Calu3 (cell line): ENCODE measurements at regions of chr20 and their contacts with region 1.

Region 1: GRCh38 chr20:33097001-33097400 is 17.6 kb downstream of the BPIFB4 start:
- DNase-seq: no peak
- H3K4me3 Mint-ChIP-seq: no peak overlapping the region
- H3K27ac Mint-ChIP-seq: no peak overlapping the region
- H3K4me1 Mint-ChIP-seq: no peaks in the 10 kb centered on the region
- H3K27me3 Mint-ChIP-seq: peaks cover 72% of the 10 kb centered on the region
- CTCF ChIP-seq: no peak

Region 2: DNA sequence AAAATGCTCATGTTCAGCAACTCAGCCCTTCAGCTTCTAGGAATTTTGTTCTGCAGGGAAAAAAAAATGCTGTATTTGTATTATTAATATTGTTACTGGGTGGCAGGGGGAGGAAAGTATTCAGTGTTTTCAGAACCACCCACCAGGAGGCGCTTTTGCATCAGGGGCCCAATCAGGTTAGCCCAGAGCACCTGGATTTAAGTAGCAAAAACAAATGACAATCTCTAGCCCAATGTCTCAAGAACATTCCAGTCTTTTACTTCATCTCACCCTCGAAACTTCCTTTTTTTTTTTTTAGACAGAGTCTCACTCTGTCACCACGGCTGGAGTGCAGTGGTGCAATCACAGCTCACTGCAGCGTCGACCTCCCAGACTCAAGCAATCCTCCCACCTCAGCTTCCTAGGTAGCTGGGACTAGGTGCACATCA is 422.6 kb before region 1 on chr20:
- CTCF ChIA-PET with region 1: no interaction called
- intact Hi-C with region 1: loop called (anchors 5 kb)
- DNase-seq: peak; percentile 83
- H3K4me3 Mint-ChIP-seq: no peak overlapping the region
- H3K27ac Mint-ChIP-seq: no peak overlapping the region
- H3K4me1 Mint-ChIP-seq: no peaks in the 10 kb centered on the region
- H3K27me3 Mint-ChIP-seq: no peaks in the 10 kb centered on the region
- CTCF ChIP-seq: peak; percentile 88

Region 3: DNA sequence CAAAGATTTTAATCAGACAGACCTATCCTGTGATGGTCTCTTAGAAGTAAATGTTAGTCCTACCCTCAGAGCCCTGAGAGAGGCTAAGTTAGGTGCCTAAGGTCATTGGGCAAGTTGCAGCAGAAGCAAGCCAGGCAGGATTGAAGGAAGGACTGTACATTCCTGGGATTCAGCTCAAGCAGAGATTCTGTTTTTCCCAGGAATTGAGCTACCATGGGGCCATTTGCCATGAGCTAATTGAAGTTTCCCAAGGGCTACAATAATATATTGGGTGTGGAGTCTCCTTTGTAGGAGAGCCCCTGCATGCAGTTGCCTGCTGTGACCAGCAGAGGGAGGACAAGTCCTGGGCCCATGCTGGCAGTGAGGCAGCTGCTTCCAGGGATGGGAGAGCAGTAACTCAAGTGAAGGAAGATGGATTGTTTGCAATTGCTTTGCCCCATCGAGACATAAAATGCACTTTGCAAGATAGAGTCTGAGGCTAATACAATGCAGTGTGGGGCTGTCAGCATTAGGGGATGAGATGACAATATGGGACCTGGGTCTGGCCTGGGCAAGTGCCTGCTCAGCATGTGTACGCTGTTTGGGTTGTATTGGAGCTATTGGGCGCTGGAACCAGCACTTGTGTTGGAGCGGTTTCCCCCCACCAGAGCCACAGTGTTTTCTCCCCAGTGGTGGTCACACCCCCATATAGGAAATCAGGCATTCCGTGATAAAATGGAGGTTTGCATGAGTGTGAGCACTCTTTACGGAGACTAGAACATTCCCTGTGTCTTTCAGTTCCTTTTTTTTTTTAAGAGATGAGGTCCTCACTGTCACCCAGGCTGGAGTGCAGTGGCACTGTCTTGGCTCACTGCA is 306.9 kb before region 1 on chr20:
- CTCF ChIA-PET with region 1: interaction called, 7 read pairs
- intact Hi-C with region 1: loop called (anchors 1 kb)
- DNase-seq: peak; percentile 90
- H3K4me3 Mint-ChIP-seq: no peak overlapping the region
- H3K27ac Mint-ChIP-seq: no peak overlapping the region
- H3K4me1 Mint-ChIP-seq: peaks cover 8% of the 10 kb centered on the region
- H3K27me3 Mint-ChIP-seq: no peaks in the 10 kb centered on the region
- CTCF ChIP-seq: peak; percentile 100

Region 4: DNA sequence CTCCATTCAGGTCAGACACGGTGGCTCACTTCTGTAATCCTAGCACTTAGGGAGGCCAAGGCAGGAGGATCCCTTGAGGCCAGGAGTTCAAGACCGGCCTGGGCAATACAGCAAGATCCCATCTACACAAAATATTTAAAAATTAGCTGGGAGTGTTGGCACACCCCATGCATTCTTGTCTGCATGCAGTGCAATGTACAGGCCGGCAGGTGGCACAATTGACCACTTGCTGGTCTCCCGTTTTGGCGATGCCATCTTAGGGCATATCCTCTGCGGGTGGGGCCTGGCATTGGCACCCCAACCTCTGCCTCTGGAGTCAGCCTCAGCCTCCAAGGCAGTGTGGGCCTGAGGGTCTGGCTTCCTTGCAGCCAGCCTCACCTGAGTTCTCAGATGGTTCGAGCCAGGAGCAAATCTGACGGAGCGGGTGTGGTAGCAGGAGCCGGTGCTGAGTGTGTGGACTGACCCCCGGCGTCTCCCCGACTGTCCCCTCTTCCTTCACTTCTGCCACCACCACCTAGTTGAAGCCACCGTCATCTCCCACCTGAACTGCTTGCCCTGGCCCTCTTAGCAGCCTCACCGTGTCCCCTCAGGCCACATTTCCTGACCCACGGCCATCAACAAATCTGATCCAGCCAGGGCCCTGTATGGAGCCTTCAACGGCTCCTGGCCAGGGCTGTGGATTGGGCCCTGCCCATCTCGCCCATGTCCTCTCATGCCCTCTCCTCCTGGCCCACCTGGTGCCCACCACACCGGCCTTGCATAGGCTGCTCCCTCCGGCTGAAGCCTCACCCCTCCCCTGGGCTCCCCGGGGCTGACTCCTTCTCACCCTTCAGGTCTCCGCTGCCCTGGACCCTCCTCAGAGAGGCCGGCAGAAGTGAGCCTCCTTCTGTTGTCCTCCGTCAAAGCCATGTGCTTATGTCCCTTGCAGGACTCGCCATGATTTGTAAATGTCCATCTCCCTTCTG is 194.3 kb before region 1 on chr20:
- CTCF ChIA-PET with region 1: interaction called, 28 read pairs
- intact Hi-C with region 1: loop called (anchors 1 kb)
- DNase-seq: peak; percentile 75
- H3K4me3 Mint-ChIP-seq: no peak overlapping the region
- H3K27ac Mint-ChIP-seq: no peak overlapping the region
- H3K4me1 Mint-ChIP-seq: no peaks in the 10 kb centered on the region
- H3K27me3 Mint-ChIP-seq: peaks cover 28% of the 10 kb centered on the region
- CTCF ChIP-seq: peak; percentile 97

Region 5: GRCh38 chr20:33211817-33212424 is 114.9 kb after region 1 on chr20:
- CTCF ChIA-PET with region 1: interaction called, 21 read pairs
- intact Hi-C with region 1: loop called (anchors 1 kb)
- DNase-seq: peak; percentile 85
- H3K4me3 Mint-ChIP-seq: no peak overlapping the region
- H3K27ac Mint-ChIP-seq: no peak overlapping the region
- H3K4me1 Mint-ChIP-seq: peaks cover 8% of the 10 kb centered on the region
- H3K27me3 Mint-ChIP-seq: peaks cover 100% of the 10 kb centered on the region
- CTCF ChIP-seq: peak; percentile 72

Region 6: GRCh38 chr20:33262658-33263065 is 165.7 kb after region 1 on chr20:
- CTCF ChIA-PET with region 1: interaction called, 11 read pairs
- intact Hi-C with region 1: no loop called
- DNase-seq: peak; percentile 81
- H3K4me3 Mint-ChIP-seq: no peak overlapping the region
- H3K27ac Mint-ChIP-seq: peak overlapping the region; percentile 24
- H3K4me1 Mint-ChIP-seq: peaks cover 16% of the 10 kb centered on the region
- H3K27me3 Mint-ChIP-seq: no peaks in the 10 kb centered on the region
- CTCF ChIP-seq: peak; percentile 87

Region 7: GRCh38 chr20:33299111-33299603 is 202.2 kb after region 1 on chr20:
- CTCF ChIA-PET with region 1: interaction called, 6 read pairs
- intact Hi-C with region 1: loop called (anchors 1 kb)
- DNase-seq: peak; percentile 93
- H3K4me3 Mint-ChIP-seq: peak overlapping the region; percentile 10
- H3K27ac Mint-ChIP-seq: no peak overlapping the region
- H3K4me1 Mint-ChIP-seq: peaks cover 5% of the 10 kb centered on the region
- H3K27me3 Mint-ChIP-seq: peaks cover 63% of the 10 kb centered on the region
- CTCF ChIP-seq: peak; percentile 99